HEK293 (cell line): ENCODE measurements at regions of chr7 and their contacts with region 1.

Region 1: DNA sequence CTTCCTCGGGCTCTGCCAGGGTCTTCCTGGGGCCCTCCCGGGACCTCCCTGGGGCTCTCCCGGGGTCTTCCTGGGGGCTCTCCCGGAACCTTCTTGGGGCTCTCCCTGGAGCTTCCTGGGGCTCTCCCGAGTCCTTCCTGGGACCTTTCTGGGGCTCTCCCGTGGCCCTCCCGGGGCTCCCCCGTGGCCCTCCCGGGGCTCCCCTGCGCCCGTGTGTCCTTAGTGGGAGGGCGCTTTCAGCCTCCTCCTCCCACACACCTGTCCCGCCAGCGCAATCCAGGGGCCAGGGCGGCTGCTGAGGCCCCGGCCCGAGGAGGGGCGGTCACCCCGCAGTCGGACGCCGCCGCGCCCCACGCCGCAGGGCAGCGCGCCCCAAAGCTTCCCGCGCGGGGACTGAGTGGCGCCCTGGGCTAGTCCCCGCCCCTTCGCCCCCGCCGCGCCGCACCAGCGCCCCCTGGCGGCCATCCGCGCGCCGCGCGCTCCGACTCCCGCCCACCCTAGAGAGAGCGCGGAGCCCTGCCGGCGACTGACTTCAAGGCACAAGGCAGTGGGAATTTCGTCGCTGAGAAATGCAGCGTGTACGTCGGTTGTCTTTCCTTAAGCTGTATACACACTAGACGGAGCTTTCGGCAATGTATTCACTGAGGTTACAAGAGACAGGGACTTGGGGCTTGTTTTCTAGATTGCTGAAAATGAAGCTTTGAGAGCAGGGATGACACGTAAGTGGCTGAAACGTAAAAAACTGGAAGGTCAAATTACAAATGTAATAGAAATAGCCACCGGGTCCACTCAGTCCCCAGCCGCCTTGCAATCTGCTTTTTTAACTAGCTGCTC is 47.1 kb downstream of the INSIG1 start:
- H3K4me3 ChIP-seq: peak overlapping the region; percentile 38
- H3K27ac ChIP-seq: peak overlapping the region; percentile 60; the same call in 1 of the 2 replicates
- H3K4me1 ChIP-seq: no peaks in the 10 kb centered on the region
- CTCF ChIP-seq: peak; percentile 42; the same call in 1 of the 2 replicates

Region 2: DNA sequence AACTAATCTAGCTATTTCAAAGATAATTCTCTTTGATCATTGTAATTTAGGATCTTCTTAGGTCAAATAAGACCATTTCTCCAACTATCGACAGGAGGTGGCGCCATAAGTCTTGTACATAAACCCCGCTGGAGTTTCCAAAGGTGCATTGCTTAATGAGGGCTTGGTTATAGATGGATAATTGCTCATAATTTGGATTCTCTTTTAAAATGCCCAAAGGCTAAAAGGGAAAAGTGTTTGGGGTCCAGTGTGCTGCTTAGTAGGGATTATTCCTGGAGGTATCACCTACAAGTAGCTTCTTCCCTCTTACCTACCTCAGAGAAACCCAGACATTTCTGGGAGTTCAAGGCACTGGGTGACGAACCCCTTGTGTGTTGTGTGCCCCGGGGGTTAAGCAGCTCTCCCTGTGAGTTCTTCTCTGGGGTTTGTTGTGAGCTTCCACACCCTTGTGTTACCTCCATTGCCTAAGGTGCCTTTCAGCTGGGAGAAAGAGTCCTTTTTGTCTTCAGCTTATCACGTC is 417.1 kb before region 1 on chr7:
- CTCF ChIA-PET with region 1: interaction called, 29 read pairs
- POLR2A ChIA-PET with region 1: interaction called, 3 read pairs
- H3K4me3 ChIP-seq: peak overlapping the region; percentile 41
- H3K27ac ChIP-seq: no peak overlapping the region
- H3K4me1 ChIP-seq: no peaks in the 10 kb centered on the region
- CTCF ChIP-seq: peak; percentile 39; the same call in 1 of the 2 replicates

Region 3: DNA sequence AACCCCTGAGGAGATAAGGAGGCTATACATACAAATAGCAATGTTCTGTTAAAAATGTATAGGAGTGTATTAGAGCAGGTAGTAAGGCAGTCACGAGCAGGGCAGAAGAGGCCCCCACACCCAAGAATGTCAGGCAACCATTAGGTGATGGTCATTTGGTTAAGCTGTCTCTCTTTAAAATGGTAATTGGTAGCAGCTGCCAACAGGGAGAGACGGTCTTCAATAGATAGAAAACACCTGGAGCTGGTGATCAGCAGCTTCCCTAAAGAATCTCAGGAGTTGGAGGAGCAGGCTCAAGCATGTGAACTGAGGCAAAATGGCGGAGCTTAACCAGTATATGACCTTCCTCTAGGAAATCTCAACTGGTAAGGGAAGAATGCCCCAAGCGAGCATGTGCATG is 301.1 kb before region 1 on chr7:
- CTCF ChIA-PET with region 1: no interaction called
- POLR2A ChIA-PET with region 1: no interaction called
- H3K4me3 ChIP-seq: no peak overlapping the region
- H3K27ac ChIP-seq: no peak overlapping the region
- H3K4me1 ChIP-seq: no peaks in the 10 kb centered on the region
- CTCF ChIP-seq: no peak

Region 4: GRCh38 chr7:155190688-155191087 is 154.1 kb before region 1 on chr7:
- CTCF ChIA-PET with region 1: interaction called, 19 read pairs
- POLR2A ChIA-PET with region 1: no interaction called
- H3K4me3 ChIP-seq: no peak overlapping the region
- H3K27ac ChIP-seq: no peak overlapping the region
- H3K4me1 ChIP-seq: no peaks in the 10 kb centered on the region
- CTCF ChIP-seq: peak; percentile 54; the same call in 1 of the 2 replicates

Region 5: GRCh38 chr7:155298834-155299534 is 45.8 kb before region 1 on chr7:
- CTCF ChIA-PET with region 1: interaction called, 10 read pairs
- POLR2A ChIA-PET with region 1: no interaction called
- H3K4me3 ChIP-seq: peak overlapping the region; percentile 61
- H3K27ac ChIP-seq: peak overlapping the region; percentile 82
- H3K4me1 ChIP-seq: peaks cover 3% of the 10 kb centered on the region; the same call in 1 of the 2 replicates
- CTCF ChIP-seq: no peak

Region 6: GRCh38 chr7:155324012-155324917 is 20.6 kb before region 1 on chr7:
- CTCF ChIA-PET with region 1: interaction called, 10 read pairs
- POLR2A ChIA-PET with region 1: no interaction called
- H3K4me3 ChIP-seq: no peak overlapping the region
- H3K27ac ChIP-seq: no peak overlapping the region
- H3K4me1 ChIP-seq: no peaks in the 10 kb centered on the region
- CTCF ChIP-seq: no peak

Region 7: GRCh38 chr7:155332209-155332965 is 12.4 kb before region 1 on chr7:
- CTCF ChIA-PET with region 1: interaction called, 10 read pairs
- POLR2A ChIA-PET with region 1: no interaction called
- H3K4me3 ChIP-seq: no peak overlapping the region
- H3K27ac ChIP-seq: no peak overlapping the region
- H3K4me1 ChIP-seq: no peaks in the 10 kb centered on the region
- CTCF ChIP-seq: no peak

Region 8: DNA sequence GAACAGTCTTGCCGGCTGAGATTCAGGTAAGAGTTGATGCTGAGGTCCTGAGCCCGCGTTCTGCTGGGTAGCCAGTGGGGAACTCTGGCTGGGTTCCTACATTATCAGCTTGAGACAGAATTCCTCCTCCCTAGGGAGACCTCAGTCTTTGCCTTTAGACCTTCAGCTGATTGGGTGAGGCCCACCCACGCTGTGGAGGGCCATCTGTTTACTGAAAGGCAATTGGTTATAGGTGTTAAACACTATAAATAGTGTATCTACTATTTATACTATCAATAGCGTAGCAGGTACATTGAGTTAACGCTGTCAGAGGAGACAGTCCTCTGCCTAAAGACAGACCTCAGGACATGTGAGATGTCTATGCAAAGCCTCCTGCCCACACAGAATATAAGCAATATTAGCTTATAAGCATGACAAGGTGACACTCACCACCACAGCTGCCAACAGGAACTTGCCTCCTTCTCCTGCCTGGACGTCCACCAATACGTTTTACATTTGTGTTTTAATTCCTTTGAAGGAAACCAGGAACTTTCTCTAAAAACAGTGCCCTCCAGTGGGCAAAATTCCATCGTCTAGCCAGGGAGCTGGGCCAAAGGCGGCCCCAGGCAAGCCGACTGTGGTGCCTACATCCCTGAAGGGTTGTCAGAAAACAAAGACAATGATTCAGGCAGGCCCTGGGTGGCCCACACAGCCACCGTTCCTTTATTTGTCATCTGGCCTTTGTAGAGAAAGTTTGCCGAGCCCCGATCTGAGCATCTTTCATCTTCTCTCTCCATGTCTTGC is 11.7 kb after region 1 on chr7:
- CTCF ChIA-PET with region 1: interaction called, 18 read pairs
- POLR2A ChIA-PET with region 1: no interaction called
- H3K4me3 ChIP-seq: no peak overlapping the region
- H3K27ac ChIP-seq: no peak overlapping the region
- H3K4me1 ChIP-seq: no peaks in the 10 kb centered on the region
- CTCF ChIP-seq: no peak